Cardiac septum (tissue), 1 donor: ENCODE measurements at regions of chr9 and their contacts with region 1.

Region 1: DNA sequence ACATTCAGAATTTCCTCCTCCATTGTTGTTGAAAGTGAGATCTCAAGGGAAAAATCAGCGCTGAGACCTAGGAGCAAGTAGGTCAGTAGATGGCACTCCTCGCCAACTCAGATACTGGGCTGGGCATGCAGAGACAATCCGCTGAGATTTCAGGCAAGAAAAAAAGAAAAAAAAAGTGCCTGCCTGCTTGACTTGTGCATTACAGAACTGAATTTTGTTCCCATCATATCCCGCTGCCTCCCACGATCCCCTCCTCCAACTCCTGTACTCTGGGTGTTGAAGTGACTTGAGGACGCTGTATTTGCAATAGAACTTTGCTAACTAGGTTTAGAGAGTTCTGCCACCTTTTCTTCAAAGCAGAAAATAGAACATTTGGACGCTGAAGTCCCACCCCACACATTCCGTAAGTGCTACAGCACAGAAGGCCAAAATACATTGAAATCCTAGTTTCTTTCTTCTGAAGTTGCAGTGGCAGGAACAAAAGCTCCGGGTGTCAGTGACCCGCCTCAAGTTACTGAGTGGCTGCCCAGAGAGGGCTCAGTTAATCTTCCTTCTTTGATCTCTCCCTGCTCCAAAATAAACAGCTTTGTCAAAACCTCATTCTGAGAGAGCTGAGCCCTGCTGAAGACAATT is 265.8 kb downstream of the MLLT3 start:
- DNase-seq: no peak

Region 2: DNA sequence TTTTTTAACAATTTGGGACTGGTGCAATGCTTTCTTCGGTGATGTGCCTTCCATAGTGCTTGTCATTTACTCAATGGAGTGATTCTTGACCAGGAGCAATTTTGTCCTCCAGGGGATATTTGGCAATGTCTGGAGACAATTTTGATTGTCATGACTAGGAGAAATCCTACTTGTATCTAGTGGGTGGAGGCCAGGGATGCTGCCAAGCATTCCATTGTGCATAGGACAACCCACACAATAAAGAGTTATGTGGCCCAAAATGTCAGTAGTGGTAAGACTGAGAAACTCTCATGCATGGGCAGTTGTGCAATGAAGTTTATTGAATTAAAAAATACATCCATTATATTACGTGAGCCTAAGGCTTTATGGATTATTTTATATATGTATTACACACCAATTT is 398.0 kb after region 1 on chr9:
- intact Hi-C with region 1: loop called (anchors 10 kb)
- DNase-seq: no peak

Region 3: GRCh38 chr9:20941174-20941690 is 584.7 kb after region 1 on chr9:
- intact Hi-C with region 1: loop called (anchors 5 kb)
- DNase-seq: no peak